T-cell (primary cell): ENCODE measurements at regions of chr9 and their contacts with region 1.

Region 1: GRCh38 chr9:104863180-104863883 is 64.6 kb downstream of the ABCA1 start:
- DNase-seq: peak in 33 of 35 experiments; percentile 8 to 73 (median 33)
- ATAC-seq: peak; percentile 55 to 88 (median 78)
- H3K4me3 ChIP-seq: no peak overlapping the region
- H3K4me3 Mint-ChIP-seq: no peak overlapping the region
- H3K27ac ChIP-seq: no peak overlapping the region
- H3K27ac Mint-ChIP-seq: no peak overlapping the region
- H3K4me1 ChIP-seq: no peaks in the 10 kb centered on the region
- H3K4me1 Mint-ChIP-seq: peaks cover 4 to 6% (median 5%) of the 10 kb centered on the region in 3 donors
- H3K27me3 ChIP-seq: no peaks in the 10 kb centered on the region
- H3K27me3 Mint-ChIP-seq: no peaks in the 10 kb centered on the region

Region 2: DNA sequence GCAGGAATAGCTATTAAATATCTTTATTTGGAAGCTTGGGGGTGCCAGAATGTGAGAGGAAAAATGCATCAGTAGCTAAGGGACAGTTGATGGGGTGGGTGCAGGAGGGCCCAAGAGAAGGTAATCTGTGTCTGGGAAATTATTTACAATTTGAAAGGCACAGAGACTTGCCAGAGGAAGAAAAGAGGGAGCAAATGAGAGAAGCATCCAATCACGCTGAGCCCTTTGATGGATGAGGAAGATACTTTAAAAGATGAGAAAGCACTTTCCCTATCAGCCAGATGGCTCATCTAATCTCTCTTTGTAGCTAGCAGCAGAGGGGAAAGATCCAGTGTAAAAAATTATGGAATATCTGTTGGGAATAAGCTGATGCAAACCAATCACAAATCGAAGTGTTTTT is 121.6 kb after region 1 on chr9:
- CTCF ChIA-PET with region 1: interaction called in 1 of 2 experiments, 10 read pairs
- POLR2A ChIA-PET with region 1: no interaction called
- DNase-seq: no peak
- ATAC-seq: peak in 1 of 4 experiments; percentile 26
- H3K4me3 ChIP-seq: no peak overlapping the region
- H3K4me3 Mint-ChIP-seq: peak overlapping the region in 1 of 3 donors; percentile 1
- H3K27ac ChIP-seq: no peak overlapping the region
- H3K27ac Mint-ChIP-seq: peak overlapping the region in 1 of 2 donors; percentile 30
- H3K4me1 ChIP-seq: peaks cover 0 to under 1% of the 10 kb centered on the region in 2 experiments
- H3K4me1 Mint-ChIP-seq: peaks cover 9 to 30% (median 28%) of the 10 kb centered on the region in 3 donors
- H3K27me3 ChIP-seq: no peaks in the 10 kb centered on the region
- H3K27me3 Mint-ChIP-seq: peaks cover 0 to 4% of the 10 kb centered on the region in 2 donors

Region 3: GRCh38 chr9:105414947-105415661 is 551.8 kb after region 1 on chr9:
- CTCF ChIA-PET with region 1: interaction called, 9 to 11 read pairs
- POLR2A ChIA-PET with region 1: no interaction called
- DNase-seq: peak; percentile 5 to 85 (median 43)
- ATAC-seq: peak; percentile 73 to 84 (median 76)
- H3K4me3 ChIP-seq: no peak overlapping the region
- H3K4me3 Mint-ChIP-seq: no peak overlapping the region
- H3K27ac ChIP-seq: no peak overlapping the region
- H3K27ac Mint-ChIP-seq: no peak overlapping the region
- H3K4me1 ChIP-seq: peaks cover 0 to 3% of the 10 kb centered on the region in 2 experiments
- H3K4me1 Mint-ChIP-seq: peaks cover 2 to 4% (median 2%) of the 10 kb centered on the region in 3 donors
- H3K27me3 ChIP-seq: peaks cover 0 to 5% of the 10 kb centered on the region in 2 experiments
- H3K27me3 Mint-ChIP-seq: peaks cover 28 to 43% of the 10 kb centered on the region in 2 donors